MCF 10A (cell line): ENCODE measurements at regions of chr19 and their contacts with region 1.

Region 1: DNA sequence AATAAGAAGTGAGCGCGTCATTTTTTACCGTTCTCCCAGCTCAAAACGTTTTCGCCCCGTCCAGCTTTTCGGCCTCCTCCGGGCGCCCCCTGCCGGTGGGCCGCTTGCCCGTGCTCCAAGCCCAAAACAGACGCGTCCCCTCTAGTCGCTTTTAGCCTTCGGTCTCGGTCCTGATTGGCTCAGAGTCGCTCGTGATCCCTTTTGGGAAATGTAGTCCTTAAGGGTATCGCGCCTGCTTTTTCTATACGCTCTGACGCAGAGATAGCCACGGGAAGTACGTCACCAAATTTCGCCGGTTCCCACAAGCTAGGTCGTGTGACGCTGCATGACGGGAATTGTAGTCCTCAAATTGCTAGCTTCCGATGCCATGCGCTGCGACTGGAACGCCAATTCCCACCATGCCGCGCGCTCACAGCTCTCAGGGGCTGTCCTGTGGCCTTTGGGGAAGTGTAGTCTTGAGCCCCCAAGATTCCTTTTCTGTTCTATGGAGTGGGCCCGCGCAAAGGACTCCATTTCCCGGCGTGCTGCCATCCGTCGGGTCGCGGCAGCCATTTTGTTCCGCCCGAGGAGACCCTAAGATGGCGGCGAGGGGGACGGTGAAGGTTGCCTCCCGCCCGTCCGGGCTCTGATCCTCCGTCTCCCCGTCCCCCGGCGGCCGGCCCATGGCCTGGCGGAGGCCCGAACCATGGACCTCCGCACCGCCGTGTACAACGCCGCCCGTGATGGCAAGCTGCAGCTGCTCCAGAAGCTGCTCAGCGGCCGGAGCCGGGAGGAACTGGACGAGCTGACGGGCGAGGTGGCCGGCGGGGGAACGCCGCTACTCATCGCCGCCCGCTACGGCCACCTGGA is at the start of gene FEM1A:
- DNase-seq: peak; percentile 100
- H3K4me3 Mint-ChIP-seq: peak within 1 kb of the TSS; percentile 79
- H3K27ac Mint-ChIP-seq: peak within 1 kb of the TSS; percentile 83
- H3K4me1 Mint-ChIP-seq: peaks cover 11% of the 10 kb centered on the region
- H3K27me3 Mint-ChIP-seq: no peaks in the 10 kb centered on the region
- CTCF ChIP-seq: peak; percentile 85
- total RNA-seq, gene FEM1A: 13.5 and 15.4 TPM in 2 replicates

Region 2: DNA sequence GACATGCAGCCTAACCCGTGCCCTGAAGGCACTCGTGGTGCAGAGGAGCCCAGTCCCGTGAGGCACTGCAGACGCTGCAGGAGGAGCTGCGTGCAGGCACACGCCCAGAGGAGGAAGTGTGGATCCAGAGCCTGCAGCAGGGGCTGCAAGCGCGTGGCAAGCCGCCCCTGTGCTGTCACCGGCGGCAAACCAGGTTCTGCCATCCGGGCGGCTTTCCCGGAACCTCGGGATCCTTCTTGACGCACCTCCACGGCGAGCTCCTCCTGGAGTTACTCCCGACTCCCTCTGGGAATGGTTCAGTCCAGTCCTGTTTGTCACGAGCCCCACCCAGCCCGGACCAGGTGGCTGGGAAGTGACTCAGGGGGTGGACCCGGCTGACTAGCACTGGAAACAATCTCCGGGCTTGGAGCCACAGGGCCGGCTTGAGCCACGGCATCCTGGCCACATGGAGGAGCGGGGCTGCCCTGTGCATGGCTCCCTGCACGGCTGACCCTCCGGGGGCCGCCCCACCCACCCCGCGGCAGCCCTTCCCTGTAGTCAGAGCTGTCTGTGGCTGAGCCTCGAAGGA is 77.9 kb before region 1 on chr19:
- CTCF ChIA-PET with region 1: no interaction called
- POLR2A ChIA-PET with region 1: interaction called, 13 read pairs
- intact Hi-C with region 1: no loop called
- DNase-seq: peak; percentile 99
- H3K4me3 Mint-ChIP-seq: peak overlapping the region; percentile 70
- H3K27ac Mint-ChIP-seq: peak overlapping the region; percentile 90
- H3K4me1 Mint-ChIP-seq: peaks cover 24% of the 10 kb centered on the region
- H3K27me3 Mint-ChIP-seq: no peaks in the 10 kb centered on the region
- CTCF ChIP-seq: no peak

Region 3: GRCh38 chr19:4732680-4733114 is 58.7 kb before region 1 on chr19:
- CTCF ChIA-PET with region 1: interaction called, 46 read pairs
- POLR2A ChIA-PET with region 1: interaction called, 20 read pairs
- intact Hi-C with region 1: loop called (anchors 1 kb)
- DNase-seq: peak; percentile 73
- H3K4me3 Mint-ChIP-seq: no peak overlapping the region
- H3K27ac Mint-ChIP-seq: no peak overlapping the region
- H3K4me1 Mint-ChIP-seq: peaks cover 5% of the 10 kb centered on the region
- H3K27me3 Mint-ChIP-seq: peaks cover 12% of the 10 kb centered on the region
- CTCF ChIP-seq: peak; percentile 84

Region 4: DNA sequence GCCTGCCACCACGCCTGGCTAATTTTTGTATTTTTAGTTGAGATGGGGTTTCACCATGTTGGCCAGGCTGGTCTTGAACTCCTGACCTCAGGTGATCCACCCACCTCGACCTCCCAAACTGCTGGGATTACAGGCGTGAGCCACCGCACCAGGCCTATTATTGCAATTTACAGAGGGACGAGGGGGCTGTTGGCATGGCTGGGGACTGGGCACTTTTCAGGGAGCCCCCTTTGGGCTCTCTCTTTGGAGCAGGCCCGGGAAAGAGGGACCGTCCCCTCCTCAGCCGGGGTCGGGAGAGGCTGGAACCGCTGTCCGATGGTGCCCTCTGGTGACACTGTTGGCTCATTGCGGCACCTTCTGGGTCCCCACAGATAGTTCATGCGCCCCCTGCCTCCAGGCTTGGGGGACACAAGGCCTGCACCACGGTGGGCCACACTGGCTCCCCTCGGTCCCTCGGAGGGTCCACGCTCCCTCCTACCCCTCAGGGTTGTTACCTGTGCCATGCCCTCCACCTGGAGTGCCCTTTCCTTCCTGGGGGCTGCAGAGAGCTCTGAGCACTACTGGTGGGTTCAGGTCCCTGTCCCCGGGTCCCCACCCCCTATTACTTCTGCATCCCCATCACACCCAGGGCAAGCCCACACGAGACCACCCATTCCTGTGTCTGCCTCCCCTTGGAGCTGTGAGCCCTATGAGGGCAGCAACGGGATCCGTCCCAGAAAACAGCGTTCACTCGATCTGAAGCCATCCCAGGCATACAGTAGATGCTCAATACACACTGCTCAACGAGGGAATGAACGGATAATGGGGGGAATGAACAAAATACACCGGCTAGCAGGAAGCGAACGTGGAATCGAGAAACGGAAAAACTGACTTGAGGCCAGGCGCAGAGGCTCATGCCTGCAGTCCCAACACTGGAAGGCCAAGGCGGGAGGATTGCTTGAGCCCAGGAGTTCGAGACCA is 12.6 kb after region 1 on chr19:
- CTCF ChIA-PET with region 1: interaction called, 11 read pairs
- POLR2A ChIA-PET with region 1: interaction called, 12 read pairs
- intact Hi-C with region 1: no loop called
- DNase-seq: peak; percentile 70
- H3K4me3 Mint-ChIP-seq: no peak overlapping the region
- H3K27ac Mint-ChIP-seq: no peak overlapping the region
- H3K4me1 Mint-ChIP-seq: no peaks in the 10 kb centered on the region
- H3K27me3 Mint-ChIP-seq: no peaks in the 10 kb centered on the region
- CTCF ChIP-seq: peak; percentile 94

Region 5: DNA sequence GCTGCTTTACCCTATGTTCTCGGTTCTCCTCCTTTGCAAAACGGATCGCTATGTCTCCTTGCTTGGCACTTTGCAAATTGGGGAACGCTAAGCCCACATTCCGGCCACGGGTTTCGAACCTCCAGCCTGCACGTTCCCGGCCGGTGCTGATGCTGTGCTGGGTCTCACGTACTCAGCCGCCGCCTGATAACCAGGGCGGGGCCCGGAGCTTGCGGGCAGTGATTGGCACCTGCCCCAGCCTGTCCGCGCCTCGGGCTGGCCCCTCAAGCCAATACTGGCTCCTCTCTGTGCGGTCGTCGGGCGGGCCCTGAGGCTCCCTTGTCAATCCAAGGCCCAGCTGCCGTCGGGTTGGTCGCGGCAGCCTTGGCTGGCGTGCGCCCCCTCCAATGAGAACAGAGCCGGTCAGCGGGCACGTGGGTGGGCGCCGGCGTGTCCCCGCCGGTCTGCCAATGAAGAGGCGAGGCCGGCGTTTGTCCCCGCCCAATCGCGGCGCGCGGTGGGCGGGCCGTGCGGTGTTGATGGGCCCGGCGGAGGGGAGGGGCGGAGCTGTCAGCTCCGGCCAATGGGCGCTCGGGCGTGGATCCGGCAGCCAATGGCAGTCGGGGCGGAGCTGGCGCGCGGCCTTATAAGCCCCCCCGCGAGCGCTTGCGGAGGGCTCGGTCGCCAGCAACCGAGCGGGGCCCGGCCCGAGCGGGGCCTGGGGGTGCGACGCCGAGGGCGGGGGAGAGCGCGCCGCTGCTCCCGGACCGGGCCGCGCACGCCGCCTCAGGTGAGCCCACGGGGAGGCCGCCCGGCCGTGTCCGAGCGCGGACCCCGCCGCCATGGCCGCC is 177.3 kb after region 1 on chr19 and contains the start of gene KDM4B:
- CTCF ChIA-PET with region 1: no interaction called
- POLR2A ChIA-PET with region 1: interaction called, 10 read pairs
- intact Hi-C with region 1: no loop called
- DNase-seq: peak; percentile 99
- H3K4me3 Mint-ChIP-seq: peak within 1 kb of the TSS; percentile 83
- H3K27ac Mint-ChIP-seq: peak within 1 kb of the TSS; percentile 93
- H3K4me1 Mint-ChIP-seq: peaks cover 38% of the 10 kb centered on the region
- H3K27me3 Mint-ChIP-seq: no peaks in the 10 kb centered on the region
- CTCF ChIP-seq: no peak
- total RNA-seq, gene KDM4B: 34.4 and 36.3 TPM in 2 replicates